ENCODE measurements at regions of chr1 and their contacts with region 1.

Region 1: GRCh38 chr1:58768971-58769808 is 14.7 kb downstream of the JUN start:
- DNase-seq: peak; percentile 72 to 86 (median 74)
- ATAC-seq: peak in 2 of 4 donors; percentile 10 to 51
- H3K4me3 ChIP-seq: no peak overlapping the region
- H3K27ac ChIP-seq: no peak overlapping the region
- H3K4me1 ChIP-seq: peaks cover 3 to 26% (median 18%) of the 10 kb centered on the region in 12 donors
- H3K27me3 ChIP-seq: no peaks in the 10 kb centered on the region
- CTCF ChIP-seq: peak; percentile 75 to 92 (median 86)
- POLR2A ChIP-seq: no peak

Region 2: DNA sequence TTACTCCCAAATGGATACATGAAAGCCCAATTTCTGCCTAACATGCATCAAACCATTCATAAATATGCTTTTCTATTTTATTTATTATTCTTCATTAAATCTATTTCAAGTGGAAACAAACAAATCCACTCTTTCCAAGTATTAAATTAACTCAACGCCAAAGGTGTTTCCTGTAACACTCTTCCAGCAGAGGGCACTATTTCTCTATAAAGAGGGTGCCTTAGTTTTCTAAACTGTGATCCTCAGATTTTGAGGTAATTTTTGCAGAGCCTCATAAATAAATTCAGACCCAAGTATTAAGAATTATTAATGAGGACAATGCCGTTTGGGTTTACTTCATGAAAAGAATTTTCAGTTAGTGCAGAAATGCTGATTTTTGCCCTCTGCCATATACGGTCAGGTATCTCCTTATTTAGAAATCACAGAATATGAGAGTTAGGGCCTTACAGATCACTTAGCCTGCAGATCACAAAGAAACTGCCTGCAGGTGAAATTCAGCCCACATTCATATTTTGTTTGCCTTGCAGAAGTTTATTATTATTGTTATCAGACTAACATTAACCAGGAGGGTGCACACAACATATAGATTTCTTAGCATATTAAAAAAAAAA is 29.2 kb before region 1 on chr1:
- intact Hi-C with region 1: loop called in 8 of 10 experiments (anchors 1 to 2 kb)
- DNase-seq: peak in 1 of 5 donors; percentile 20
- ATAC-seq: peak in 1 of 4 donors; percentile 43
- H3K4me3 ChIP-seq: no peak overlapping the region
- H3K27ac ChIP-seq: no peak overlapping the region
- H3K4me1 ChIP-seq: peaks cover 0 to 21% (median 0%) of the 10 kb centered on the region in 12 donors
- H3K27me3 ChIP-seq: no peaks in the 10 kb centered on the region
- CTCF ChIP-seq: peak; percentile 72 to 92 (median 88)
- POLR2A ChIP-seq: no peak

Region 3: DNA sequence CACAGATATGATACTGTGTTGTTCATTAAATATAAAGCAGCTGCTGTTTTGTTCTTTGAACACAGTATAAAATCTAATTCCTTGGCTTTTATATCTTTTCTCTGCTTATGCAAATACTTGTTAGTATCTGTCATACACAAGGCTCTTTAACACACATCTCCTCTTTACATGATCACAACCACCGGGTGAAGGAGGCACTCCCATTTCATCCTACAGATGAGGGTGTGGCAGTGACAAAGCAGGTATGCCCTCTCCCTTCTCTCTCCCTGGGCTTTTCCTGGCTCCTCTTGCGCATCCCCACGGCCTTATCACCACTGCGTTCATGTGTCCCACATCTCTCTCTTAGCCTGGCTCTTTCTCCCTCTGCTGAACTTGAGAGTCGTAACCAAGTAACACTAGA is 23.5 kb before region 1 on chr1:
- intact Hi-C with region 1: loop called in 8 of 10 experiments (anchors 1 to 2 kb)
- DNase-seq: no peak
- ATAC-seq: no peak
- H3K4me3 ChIP-seq: no peak overlapping the region
- H3K27ac ChIP-seq: no peak overlapping the region
- H3K4me1 ChIP-seq: no peaks in the 10 kb centered on the region
- H3K27me3 ChIP-seq: no peaks in the 10 kb centered on the region
- CTCF ChIP-seq: no peak
- POLR2A ChIP-seq: no peak